ENCODE measurements at regions of chr11 and their contacts with region 1.

Region 1: DNA sequence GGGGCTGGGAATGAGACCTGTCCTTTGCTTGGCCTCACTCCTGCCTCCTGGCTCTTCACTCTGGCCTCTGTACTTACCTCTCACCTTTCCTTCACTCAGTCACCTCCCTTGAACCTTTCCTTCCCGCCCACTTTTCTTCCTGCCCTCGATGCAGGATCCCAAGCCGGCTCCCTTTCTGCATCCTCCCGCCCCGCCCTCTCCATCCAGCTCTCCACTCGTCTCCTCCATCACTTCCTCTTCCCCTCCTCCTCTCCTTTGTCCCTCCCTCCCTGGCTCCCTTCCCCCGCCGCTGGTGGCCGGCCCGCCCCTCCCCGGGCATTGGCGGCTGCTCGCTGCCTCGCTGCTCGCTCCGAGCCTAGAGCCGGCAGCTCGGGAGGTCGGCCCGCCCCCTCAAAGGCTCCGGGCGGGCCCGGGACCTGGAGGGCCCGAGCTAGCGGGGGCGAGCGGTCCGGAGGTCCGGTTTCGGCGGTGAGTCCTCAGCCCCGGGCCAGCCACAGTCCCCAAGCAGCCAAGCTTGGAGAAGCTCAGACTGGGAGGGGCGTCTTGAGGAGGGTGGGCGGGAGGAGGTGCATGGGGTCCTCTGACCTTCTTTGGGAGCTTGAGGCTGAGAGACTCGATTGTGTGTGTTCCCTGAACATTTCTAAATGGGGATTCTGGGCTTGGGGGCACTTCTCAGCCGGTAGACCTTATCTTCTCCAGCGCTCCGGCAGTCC is 13.8 kb downstream of the PHLDB1 start:
- H3K4me3 ChIP-seq: peak overlapping the region; percentile 64
- H3K27ac ChIP-seq: peak overlapping the region; percentile 22; the same call in 1 of the 2 replicates
- H3K4me1 ChIP-seq: peaks cover 9% of the 10 kb centered on the region
- CTCF ChIP-seq: no peak

Region 2: DNA sequence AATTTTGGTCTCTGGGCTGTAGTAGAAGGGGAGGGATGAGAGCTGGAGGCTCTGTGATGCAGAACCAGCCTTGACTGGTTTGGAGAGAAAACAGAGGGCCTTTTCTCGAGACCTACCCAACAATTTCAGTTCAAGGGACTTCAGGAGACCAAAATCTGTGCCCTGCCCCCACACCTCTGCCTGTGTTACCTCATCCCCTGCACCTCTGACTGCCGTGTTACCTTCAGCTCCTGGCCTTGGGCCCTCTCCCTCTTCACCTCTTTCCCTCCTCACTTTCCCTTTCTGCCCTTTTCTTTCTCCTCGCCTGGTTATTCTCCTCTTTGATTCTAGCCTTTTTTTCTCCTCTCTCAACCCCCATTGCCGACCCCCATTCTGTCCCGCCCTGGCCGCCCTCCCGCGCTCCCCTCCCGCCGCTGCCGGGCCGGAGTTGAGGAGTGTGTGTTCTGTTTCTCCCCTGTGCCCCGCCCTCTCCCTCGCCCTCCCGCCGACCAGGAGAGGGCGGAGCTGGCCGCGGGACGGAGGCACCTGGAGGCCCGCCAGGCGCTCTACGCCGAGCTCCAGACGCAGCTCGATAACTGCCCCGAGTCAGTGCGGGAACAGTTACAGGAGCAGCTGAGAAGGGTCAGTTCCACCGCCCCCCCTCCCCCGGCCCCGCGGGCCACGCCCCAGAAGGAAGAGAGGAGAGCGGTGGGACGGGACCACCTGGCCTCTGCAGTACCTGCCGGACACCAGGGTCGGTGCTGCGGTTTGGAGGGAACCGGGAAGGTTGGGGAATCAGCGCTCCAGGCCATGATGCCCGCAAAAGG is 13.4 kb after region 1 on chr11:
- CTCF ChIA-PET with region 1: interaction called, 7 read pairs
- POLR2A ChIA-PET with region 1: interaction called, 67 read pairs
- H3K4me3 ChIP-seq: 0 out of 2 replicates have a peak overlapping the region, but pooled peaks have one; percentile 1
- H3K27ac ChIP-seq: no peak overlapping the region
- H3K4me1 ChIP-seq: peaks cover 7% of the 10 kb centered on the region; the same call in 1 of the 2 replicates
- CTCF ChIP-seq: peak; percentile 29